Naive thymus-derived CD4-positive, alpha-beta T cell (primary cell): ENCODE measurements at regions of chr17 and their contacts with region 1.

Region 1: GRCh38 chr17:75131280-75132017 is at the start of gene NT5C:
- DNase-seq: peak; percentile 32 to 82 (median 50)
- ATAC-seq: peak; percentile 85
- H3K4me3 ChIP-seq: peak within 1 kb of the TSS; percentile 71
- H3K4me3 Mint-ChIP-seq: peak within 1 kb of the TSS; percentile 79 to 93 (median 88)
- H3K27ac ChIP-seq: peak within 1 kb of the TSS; percentile 84
- H3K27ac Mint-ChIP-seq: peak within 1 kb of the TSS; percentile 76 to 93 (median 88)
- H3K4me1 ChIP-seq: peaks cover 5 to 7% of the 10 kb centered on the region in 2 donors
- H3K4me1 Mint-ChIP-seq: peaks cover 7 to 23% (median 10%) of the 10 kb centered on the region in 7 donors
- H3K27me3 ChIP-seq: no peaks in the 10 kb centered on the region
- H3K27me3 Mint-ChIP-seq: no peaks in the 10 kb centered on the region
- total RNA-seq, gene NT5C: 23.4 to 54.8 (median 37.5) TPM

Region 2: DNA sequence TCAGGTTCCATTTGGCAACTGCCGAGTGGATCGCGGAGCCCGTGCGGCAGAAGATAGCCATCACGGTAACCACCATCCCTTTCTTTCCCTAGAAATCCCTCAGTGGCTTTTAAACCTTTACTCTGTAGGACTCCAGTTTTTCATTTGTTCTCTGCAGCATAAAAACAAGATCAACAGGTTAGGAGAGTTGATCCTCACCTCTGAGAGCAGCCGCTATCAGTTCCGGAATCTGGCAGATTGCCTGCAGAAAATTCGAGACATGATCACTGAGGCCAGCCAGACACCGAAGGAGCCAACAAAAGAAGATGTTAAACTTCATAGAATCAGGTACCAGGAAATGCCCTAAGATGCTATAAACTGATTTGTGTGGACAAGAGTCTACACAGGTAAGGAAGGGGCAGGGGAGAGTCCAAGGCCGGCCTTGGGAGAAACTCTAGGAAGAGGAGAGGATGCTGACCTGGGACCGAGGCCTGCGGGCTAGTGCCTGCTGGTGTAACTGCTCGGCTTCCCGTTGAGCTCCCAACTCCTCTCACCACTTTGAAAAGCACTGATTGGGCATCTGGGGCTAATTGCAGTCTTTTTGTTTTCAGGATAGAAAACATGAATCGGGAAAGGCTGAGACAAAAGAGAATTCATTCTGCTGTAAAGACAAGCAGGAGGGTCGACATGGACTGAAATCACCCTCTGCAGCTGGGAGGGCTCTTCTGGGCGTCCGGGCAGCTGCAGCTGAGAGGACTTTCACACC is 110.9 kb before region 1 on chr17:
- CTCF ChIA-PET with region 1: no interaction called
- POLR2A ChIA-PET with region 1: no interaction called
- intact Hi-C with region 1: no loop called
- DNase-seq: no peak
- ATAC-seq: no peak
- H3K4me3 ChIP-seq: no peak overlapping the region
- H3K4me3 Mint-ChIP-seq: no peak overlapping the region
- H3K27ac ChIP-seq: no peak overlapping the region
- H3K27ac Mint-ChIP-seq: no peak overlapping the region
- H3K4me1 ChIP-seq: peaks cover 4% of the 10 kb centered on the region in 2 donors
- H3K4me1 Mint-ChIP-seq: peaks cover 11 to 29% (median 19%) of the 10 kb centered on the region in 7 donors
- H3K27me3 ChIP-seq: no peaks in the 10 kb centered on the region
- H3K27me3 Mint-ChIP-seq: no peaks in the 10 kb centered on the region

Region 3: GRCh38 chr17:75154195-75155106 is 23.0 kb after region 1 on chr17 and contains the start of gene JPT1:
- CTCF ChIA-PET with region 1: interaction called, 8 read pairs
- POLR2A ChIA-PET with region 1: interaction called, 7 read pairs
- intact Hi-C with region 1: loop called (anchors 1 kb)
- DNase-seq: peak; percentile 82 to 98 (median 96)
- ATAC-seq: peak; percentile 100
- H3K4me3 ChIP-seq: peak within 1 kb of the TSS; percentile 84
- H3K4me3 Mint-ChIP-seq: peak within 1 kb of the TSS; percentile 88 to 98 (median 94)
- H3K27ac ChIP-seq: peak within 1 kb of the TSS; percentile 80
- H3K27ac Mint-ChIP-seq: peak within 1 kb of the TSS; percentile 78 to 96 (median 92)
- H3K4me1 ChIP-seq: peaks cover 0 to 18% of the 10 kb centered on the region in 2 donors
- H3K4me1 Mint-ChIP-seq: peaks cover 11 to 39% (median 36%) of the 10 kb centered on the region in 7 donors
- H3K27me3 ChIP-seq: no peaks in the 10 kb centered on the region
- H3K27me3 Mint-ChIP-seq: no peaks in the 10 kb centered on the region
- total RNA-seq, gene JPT1: 12.3 to 227 (median 29.3) TPM

Region 4: DNA sequence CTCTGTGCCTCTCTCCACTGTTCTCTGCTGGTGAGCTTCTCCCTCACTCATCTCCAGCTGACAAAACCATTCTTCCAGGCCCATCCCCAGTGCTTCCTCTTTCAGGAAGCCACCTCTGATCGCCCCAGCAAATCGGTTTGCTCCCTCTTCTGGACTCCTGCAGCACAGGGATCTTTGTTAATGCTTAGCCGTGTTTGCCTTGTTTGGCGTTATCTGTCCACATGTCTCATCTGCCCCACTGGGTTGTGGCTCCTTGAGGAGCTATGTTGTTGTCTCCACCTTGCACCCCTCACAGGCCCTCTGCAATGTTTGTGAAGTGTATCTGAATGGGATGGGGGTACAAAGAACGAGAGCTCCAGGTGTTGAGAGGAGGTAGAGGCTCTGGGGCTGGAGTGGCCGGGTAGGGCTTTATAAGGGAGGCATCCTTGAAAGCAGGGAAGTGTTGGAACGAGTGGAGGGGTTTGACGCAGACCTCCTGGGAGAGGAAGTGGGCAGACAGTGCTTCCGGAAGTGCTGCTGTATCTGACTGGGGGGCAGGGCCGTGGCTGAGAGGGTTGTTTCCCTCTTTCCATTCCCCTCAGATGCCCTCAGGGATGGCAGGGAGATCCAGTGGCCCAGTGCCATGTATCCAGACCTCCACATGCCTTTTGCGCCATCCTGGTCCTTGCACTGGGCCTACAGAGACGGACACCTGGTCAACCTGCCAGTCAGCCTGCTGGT is 356.1 kb after region 1 on chr17:
- CTCF ChIA-PET with region 1: no interaction called
- POLR2A ChIA-PET with region 1: no interaction called
- intact Hi-C with region 1: no loop called
- DNase-seq: peak in 8 of 9 donors; percentile 35 to 67 (median 62)
- ATAC-seq: peak; percentile 83
- H3K4me3 ChIP-seq: peak overlapping the region; percentile 49
- H3K4me3 Mint-ChIP-seq: peak overlapping the region; percentile 75 to 88 (median 80)
- H3K27ac ChIP-seq: peak overlapping the region; percentile 73
- H3K27ac Mint-ChIP-seq: peak overlapping the region; percentile 94 to 98 (median 96)
- H3K4me1 ChIP-seq: peaks cover 16 to 25% of the 10 kb centered on the region in 2 donors
- H3K4me1 Mint-ChIP-seq: peaks cover 18 to 39% (median 24%) of the 10 kb centered on the region in 7 donors
- H3K27me3 ChIP-seq: no peaks in the 10 kb centered on the region
- H3K27me3 Mint-ChIP-seq: no peaks in the 10 kb centered on the region